Aorta (tissue), 5 donors: ENCODE measurements at regions of chr2 and their contacts with region 1.

Region 1: GRCh38 chr2:39039072-39039471 is 81.8 kb downstream of the SOS1 start:
- DNase-seq: no peak
- ATAC-seq: no peak
- H3K4me3 ChIP-seq: no peak overlapping the region
- H3K27ac ChIP-seq: no peak overlapping the region
- H3K4me1 ChIP-seq: no peaks in the 10 kb centered on the region
- H3K27me3 ChIP-seq: no peaks in the 10 kb centered on the region

Region 2: GRCh38 chr2:38947240-38948239 is 91.5 kb before region 1 on chr2:
- intact Hi-C with region 1: loop called (anchors 5 kb)
- DNase-seq: peak; percentile 82 to 84
- ATAC-seq: peak; percentile 66
- H3K4me3 ChIP-seq: no peak overlapping the region
- H3K27ac ChIP-seq: no peak overlapping the region
- H3K4me1 ChIP-seq: no peaks in the 10 kb centered on the region
- H3K27me3 ChIP-seq: no peaks in the 10 kb centered on the region